ENCODE measurements at regions of chr1 and their contacts with region 1.

Region 1: DNA sequence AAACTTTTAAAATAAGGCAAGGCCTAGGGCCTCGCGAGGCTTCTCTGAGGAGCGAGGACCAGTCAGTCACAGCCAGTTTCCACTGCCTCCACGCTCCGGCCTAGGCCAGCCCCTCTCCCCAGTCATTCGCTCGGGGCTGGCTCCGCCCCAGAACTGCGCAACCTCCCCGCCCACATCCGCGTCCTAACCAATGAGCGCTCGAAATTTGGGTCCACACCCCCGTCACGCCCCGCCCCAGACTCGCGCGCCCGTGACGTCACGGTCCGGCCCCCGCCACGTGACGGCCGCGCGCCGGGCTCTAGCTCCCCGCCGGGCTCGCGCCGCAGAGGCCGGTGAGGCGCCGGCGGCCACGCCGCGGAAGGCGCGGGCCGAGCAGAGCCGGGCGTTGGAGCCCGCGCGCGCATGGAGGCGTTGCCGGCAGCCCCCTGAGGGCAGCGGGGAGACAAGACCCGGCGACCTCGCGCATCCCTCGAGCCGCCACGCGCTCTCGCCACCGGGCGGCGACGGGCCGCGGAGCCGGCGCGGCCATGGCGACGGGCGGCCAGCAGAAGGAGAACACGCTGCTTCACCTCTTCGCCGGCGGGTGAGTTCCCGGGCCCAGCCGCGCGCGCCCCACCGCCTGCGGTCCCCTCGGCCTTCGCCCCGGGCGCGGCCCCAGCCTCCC is at the start of gene SLC25A33:
- DNase-seq: peak; percentile 99
- ATAC-seq: peak; percentile 99
- H3K4me3 Mint-ChIP-seq: peak within 1 kb of the TSS; percentile 80
- H3K27ac Mint-ChIP-seq: peak within 1 kb of the TSS; percentile 78
- H3K4me1 Mint-ChIP-seq: peaks cover 30% of the 10 kb centered on the region
- H3K27me3 Mint-ChIP-seq: no peaks in the 10 kb centered on the region
- total RNA-seq, gene SLC25A33: 4.4 to 6.1 TPM

Region 2: GRCh38 chr1:8915446-8915845 is 623.9 kb before region 1 on chr1:
- CTCF ChIA-PET with region 1: no interaction called
- POLR2A ChIA-PET with region 1: no interaction called
- intact Hi-C with region 1: no loop called
- DNase-seq: no peak
- ATAC-seq: no peak
- H3K4me3 Mint-ChIP-seq: no peak overlapping the region
- H3K27ac Mint-ChIP-seq: no peak overlapping the region
- H3K4me1 Mint-ChIP-seq: peaks cover 3% of the 10 kb centered on the region
- H3K27me3 Mint-ChIP-seq: no peaks in the 10 kb centered on the region

Region 3: DNA sequence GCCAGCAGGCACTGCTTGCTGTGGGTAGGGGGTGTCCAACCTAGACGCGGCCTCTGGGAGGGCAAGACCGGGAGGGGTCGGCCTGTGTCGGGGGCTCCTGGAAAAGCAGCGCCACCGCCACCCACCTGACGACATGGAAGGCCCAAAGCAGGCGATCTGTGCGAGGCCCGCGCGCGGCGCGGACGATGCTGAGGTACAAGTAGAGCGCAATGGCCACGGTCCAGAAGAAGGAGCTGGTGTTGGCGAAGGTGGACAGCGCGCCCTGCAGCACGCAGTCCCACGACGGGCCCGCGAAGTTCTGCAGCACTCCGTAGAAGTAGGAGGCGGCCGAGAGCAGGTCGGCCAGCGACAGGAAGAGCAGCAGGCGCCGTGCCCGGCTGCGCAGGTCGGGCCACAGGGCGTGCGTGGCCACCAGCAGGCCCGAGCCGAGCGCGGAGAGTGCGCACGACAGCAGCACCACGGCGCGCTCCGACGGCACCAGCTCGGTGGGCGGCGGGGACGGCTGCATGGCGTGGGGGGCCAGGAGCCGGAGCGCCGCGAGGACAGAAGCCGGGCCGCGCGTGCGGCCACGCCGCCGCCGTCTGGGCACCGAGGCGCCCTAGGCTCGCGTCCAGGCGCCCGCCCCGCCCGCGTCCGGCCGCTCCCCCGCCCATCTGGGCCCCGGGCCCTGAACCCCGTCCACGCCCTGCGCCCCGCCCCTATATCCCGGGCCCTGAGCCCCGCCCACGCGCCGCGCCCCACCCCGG is 410.6 kb before region 1 on chr1 and contains the start of gene GPR157:
- CTCF ChIA-PET with region 1: no interaction called
- POLR2A ChIA-PET with region 1: interaction called, 7 read pairs
- intact Hi-C with region 1: loop called in 1 of 2 experiments (anchors 1 kb)
- DNase-seq: peak; percentile 93
- ATAC-seq: peak; percentile 84
- H3K4me3 Mint-ChIP-seq: peak within 1 kb of the TSS; percentile 83
- H3K27ac Mint-ChIP-seq: peak within 1 kb of the TSS; percentile 67
- H3K4me1 Mint-ChIP-seq: peaks cover 37% of the 10 kb centered on the region
- H3K27me3 Mint-ChIP-seq: no peaks in the 10 kb centered on the region
- total RNA-seq, gene GPR157: 2.7 to 3.6 TPM

Region 4: GRCh38 chr1:9234223-9235095 is 304.8 kb before region 1 on chr1 and contains the start of gene H6PD:
- CTCF ChIA-PET with region 1: no interaction called
- POLR2A ChIA-PET with region 1: no interaction called
- intact Hi-C with region 1: loop called in 1 of 2 experiments (anchors 1 kb)
- DNase-seq: peak; percentile 80
- ATAC-seq: peak; percentile 76
- H3K4me3 Mint-ChIP-seq: peak within 1 kb of the TSS; percentile 82
- H3K27ac Mint-ChIP-seq: peak within 1 kb of the TSS; percentile 90
- H3K4me1 Mint-ChIP-seq: peaks cover 41% of the 10 kb centered on the region
- H3K27me3 Mint-ChIP-seq: no peaks in the 10 kb centered on the region
- total RNA-seq, gene H6PD: 8.8 to 9.6 TPM

Region 5: DNA sequence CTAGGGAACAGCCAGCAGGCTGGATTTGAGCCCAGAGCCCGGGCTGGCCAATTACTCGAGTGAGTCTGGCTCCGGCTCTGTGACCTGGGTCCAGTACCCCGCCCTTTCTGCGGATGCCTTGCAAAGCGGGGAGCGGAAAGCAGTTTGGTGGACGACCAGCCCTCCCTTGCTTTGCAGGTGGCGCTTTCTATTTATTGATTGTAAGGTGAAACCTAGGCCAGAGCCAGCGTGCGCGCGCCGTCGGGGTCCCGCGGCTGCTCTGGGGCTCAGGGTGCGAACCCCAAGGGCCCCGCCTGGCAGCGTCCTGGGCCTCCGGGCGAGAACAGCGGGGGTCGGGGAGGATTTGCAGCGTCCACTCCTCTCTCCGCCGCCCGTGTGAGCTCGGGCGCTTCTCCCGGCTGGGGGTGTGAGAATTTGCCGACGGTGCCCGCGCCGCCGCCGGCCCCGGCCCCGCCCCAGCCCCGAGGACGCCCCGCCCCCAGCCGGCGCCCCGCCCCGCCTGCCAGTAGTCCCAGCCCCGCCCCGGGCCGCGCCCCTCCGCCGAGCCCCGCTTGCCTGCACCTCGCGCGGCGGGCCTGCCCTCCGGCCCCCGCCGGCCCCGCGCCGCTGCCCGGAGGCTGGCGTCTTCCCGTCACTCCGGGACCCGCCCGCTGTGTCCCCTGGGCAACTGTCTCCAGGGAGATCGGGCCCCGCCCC is 149.9 kb after region 1 on chr1:
- CTCF ChIA-PET with region 1: no interaction called
- POLR2A ChIA-PET with region 1: no interaction called
- intact Hi-C with region 1: loop called in 1 of 2 experiments (anchors 1 kb)
- DNase-seq: peak; percentile 93
- ATAC-seq: peak; percentile 78
- H3K4me3 Mint-ChIP-seq: peak overlapping the region; percentile 70
- H3K27ac Mint-ChIP-seq: peak overlapping the region; percentile 77
- H3K4me1 Mint-ChIP-seq: peaks cover 70% of the 10 kb centered on the region
- H3K27me3 Mint-ChIP-seq: no peaks in the 10 kb centered on the region

Region 6: DNA sequence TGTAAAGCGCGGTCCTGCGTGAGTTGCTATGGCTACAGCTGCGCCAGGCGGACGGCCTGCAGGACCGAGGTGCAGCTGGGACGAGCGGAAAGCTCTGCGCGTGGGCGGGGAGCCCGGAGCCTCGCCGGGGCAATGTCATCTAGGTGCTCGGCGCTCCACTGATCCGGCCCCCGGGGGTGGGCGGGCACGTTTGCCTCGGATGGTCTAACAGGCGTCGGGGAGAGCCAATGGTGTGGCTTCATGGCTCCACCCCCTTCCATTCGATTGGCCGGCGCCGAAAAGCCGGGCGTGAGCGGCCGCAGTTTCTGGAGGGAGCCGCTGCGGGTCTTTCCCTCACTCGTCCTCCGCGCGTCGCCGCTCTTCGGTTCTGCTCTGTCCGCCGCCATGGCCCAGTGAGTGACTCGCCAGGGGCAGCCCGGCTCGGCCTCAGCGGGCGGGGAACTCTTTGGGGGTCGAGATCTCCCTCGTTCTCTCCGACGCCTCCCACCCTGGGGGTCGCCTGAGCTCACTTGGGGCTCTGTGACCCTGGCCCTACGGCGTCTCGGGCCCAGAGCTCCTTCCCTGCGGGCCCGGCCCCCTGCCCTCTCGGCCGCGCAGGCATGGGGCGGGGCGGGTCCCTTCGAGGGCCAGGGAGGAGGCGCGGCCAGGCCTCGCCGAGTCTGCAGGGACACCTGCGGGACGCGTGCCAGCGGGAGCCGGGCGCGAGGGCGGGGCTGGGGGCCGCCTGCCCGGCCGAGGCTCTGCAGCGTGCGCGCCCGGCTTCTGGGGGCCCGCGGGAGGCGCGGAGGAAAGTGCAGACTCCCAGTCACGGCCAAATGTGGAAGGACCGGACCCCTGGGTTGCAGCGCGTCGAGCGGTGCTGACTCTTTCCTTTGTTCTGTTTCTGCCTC is 859.7 kb after region 1 on chr1 and contains the start of gene PGD:
- CTCF ChIA-PET with region 1: no interaction called
- POLR2A ChIA-PET with region 1: no interaction called
- intact Hi-C with region 1: loop called in 1 of 2 experiments (anchors 1 kb)
- DNase-seq: peak; percentile 99
- ATAC-seq: peak; percentile 97
- H3K4me3 Mint-ChIP-seq: peak within 1 kb of the TSS; percentile 86
- H3K27ac Mint-ChIP-seq: peak within 1 kb of the TSS; percentile 78
- H3K4me1 Mint-ChIP-seq: peaks cover 31% of the 10 kb centered on the region
- H3K27me3 Mint-ChIP-seq: no peaks in the 10 kb centered on the region
- total RNA-seq, gene PGD: 91.6 to 93.7 TPM

Region 7: DNA sequence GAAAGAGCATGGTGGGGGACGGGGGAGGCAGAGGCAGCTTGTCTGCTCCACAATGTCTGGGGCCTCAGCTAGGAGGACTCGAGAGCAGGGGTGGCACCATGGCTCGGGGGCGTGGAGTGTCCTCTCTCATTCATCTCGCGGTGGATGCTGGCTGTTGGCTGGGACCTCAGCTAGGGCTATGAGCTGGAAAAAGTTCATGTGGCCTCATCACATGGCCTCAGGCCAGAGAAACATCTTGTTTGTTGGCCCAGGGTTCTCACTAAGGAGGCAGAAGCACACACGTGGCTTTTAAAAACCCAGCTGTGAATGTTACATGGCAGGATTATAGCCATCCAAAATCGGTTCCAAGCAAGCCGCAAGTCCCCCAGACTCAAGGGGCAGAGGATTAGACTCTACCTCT is 884.7 kb after region 1 on chr1:
- CTCF ChIA-PET with region 1: no interaction called
- POLR2A ChIA-PET with region 1: no interaction called
- intact Hi-C with region 1: no loop called
- DNase-seq: no peak
- ATAC-seq: no peak
- H3K4me3 Mint-ChIP-seq: no peak overlapping the region
- H3K27ac Mint-ChIP-seq: no peak overlapping the region
- H3K4me1 Mint-ChIP-seq: peaks cover 2% of the 10 kb centered on the region
- H3K27me3 Mint-ChIP-seq: no peaks in the 10 kb centered on the region

Region 8: DNA sequence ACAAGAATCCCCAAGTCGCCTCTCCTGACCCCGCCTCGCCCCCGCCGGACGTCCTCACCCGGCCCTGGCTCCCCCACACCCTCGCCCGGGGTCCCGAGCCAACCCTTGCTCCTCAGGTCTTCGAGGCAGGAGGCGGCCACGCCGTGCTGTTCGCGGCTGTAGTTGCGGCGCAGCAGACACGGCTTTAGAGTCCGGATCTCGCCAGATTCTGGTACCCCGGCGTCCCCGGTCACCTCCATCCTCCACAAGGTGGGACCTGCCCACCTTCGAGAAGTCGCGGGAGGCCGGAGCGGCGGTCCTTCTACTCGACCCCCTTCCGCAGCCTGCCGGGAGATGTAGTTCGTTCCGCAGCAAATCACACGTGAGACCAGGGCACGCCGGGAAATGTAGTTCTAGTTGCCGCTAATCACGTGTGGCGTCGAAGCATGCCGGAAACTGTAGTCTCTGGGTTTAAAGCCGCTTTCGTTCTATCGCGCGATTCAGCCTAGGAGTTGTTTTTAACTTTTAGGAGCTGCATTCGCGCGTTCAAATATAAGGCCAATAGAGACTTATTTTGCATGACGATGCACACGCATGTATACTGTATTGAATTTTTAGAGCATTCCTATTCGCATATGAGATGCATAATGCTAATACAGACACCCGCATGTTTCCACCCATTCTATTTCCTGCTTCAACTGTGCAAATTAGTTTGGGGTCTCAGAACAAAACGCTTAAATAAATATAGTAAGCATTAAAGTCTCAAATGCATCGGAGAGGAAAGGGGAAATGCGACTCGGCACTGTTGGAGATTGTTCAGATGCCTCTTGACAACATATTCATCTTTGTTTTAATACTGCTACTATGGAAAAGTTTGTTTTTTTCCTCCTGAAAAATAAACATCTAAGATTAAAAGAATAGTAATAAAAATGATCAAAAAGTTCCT is 933.2 kb after region 1 on chr1 and contains the start of gene DFFA:
- CTCF ChIA-PET with region 1: no interaction called
- POLR2A ChIA-PET with region 1: no interaction called
- intact Hi-C with region 1: loop called in 1 of 2 experiments (anchors 5 kb)
- DNase-seq: peak; percentile 96
- ATAC-seq: peak; percentile 83
- H3K4me3 Mint-ChIP-seq: peak within 1 kb of the TSS; percentile 97
- H3K27ac Mint-ChIP-seq: peak within 1 kb of the TSS; percentile 92
- H3K4me1 Mint-ChIP-seq: peaks cover 38% of the 10 kb centered on the region
- H3K27me3 Mint-ChIP-seq: no peaks in the 10 kb centered on the region
- total RNA-seq, gene DFFA: 45.7 to 46.4 TPM